Heart left ventricle (tissue), 16 donors: ENCODE measurements at regions of chr9 and their contacts with region 1.

Region 1: DNA sequence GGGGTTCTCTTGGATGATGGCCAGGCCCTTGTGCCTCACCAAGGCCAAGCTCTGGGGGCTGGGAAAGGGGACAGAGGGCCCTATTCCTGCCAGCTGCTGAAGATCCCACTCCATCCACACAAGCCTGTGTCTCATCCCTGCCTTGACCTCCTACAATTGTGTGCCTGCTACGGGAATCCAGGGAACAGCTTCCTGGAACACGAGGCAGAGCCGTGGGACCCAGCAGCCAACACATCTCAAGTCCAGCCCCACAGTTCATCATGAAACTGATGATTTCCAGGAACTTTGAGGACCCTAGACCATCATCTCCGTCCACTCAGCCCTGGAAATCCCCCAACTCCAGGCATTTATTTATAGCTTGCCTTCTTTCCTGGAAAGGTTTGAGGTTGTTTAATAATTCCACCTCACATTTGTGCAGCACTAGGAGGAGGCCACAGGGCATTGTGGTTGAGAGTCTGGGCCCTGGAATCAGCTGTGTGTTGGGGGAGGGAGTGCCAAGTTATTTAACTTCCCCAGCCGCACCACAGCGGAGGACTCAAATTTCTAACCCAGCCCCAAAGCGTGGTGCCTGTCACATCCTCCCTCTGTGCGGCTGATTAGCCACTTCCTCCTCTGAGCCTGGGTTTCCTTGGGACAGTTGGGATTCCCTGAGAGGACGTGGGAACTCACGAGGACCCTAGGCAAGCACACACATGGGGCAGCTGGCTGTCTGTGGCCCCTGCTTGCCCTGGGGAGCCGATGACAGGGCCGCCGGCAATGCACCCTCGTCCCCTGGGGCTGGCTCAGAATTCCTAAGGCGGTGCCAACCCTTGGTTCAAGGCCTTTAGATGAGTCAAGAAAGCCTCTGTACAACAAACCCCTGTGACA is 58.2 kb upstream of the GGTA1 start:
- DNase-seq: peak; percentile 75 to 83 (median 79)
- ATAC-seq: peak; percentile 60 to 91 (median 79)
- H3K4me3 ChIP-seq: no peak overlapping the region
- H3K27ac ChIP-seq: peak overlapping the region; percentile 24 to 84 (median 70)
- H3K4me1 ChIP-seq: peaks cover 10 to 40% (median 28%) of the 10 kb centered on the region in 12 donors
- H3K27me3 ChIP-seq: no peaks in the 10 kb centered on the region
- CTCF ChIP-seq: no peak
- POLR2A ChIP-seq: no peak

Region 2: DNA sequence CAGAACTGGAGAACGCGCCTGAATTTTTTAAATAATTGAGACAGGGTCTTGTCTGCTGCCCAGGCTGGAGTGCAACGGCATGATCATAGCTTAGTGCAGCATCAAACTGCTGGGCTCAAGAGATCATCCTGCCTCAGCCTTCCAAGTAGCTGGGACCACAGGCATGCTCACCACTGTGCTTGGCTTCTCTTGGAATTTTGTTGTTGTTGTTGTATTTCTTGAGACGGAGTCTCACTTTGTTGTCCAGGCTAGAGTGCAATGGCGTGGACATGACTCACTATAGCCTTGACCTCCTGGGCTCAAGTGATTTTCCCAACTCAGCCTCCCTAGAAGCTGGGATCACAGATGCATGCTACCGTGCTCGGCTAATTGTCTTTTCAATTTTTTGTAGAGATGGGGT is 35.3 kb after region 1 on chr9:
- intact Hi-C with region 1: loop called in 5 of 10 experiments (anchors 5 kb)
- DNase-seq: no peak
- ATAC-seq: no peak
- H3K4me3 ChIP-seq: no peak overlapping the region
- H3K27ac ChIP-seq: no peak overlapping the region
- H3K4me1 ChIP-seq: peaks cover 0 to 18% (median 2%) of the 10 kb centered on the region in 12 donors
- H3K27me3 ChIP-seq: peaks cover 0 to 6% (median 0%) of the 10 kb centered on the region in 9 donors
- CTCF ChIP-seq: no peak
- POLR2A ChIP-seq: no peak

Region 3: GRCh38 chr9:121598965-121599871 is 41.4 kb after region 1 on chr9:
- intact Hi-C with region 1: loop called in 8 of 10 experiments (anchors 5 kb)
- DNase-seq: peak; percentile 82 to 88 (median 83)
- ATAC-seq: peak; percentile 70 to 88 (median 83)
- H3K4me3 ChIP-seq: peak overlapping the region; percentile 57 to 78 (median 71)
- H3K27ac ChIP-seq: peak overlapping the region; percentile 79 to 98 (median 95)
- H3K4me1 ChIP-seq: peaks cover 4 to 51% (median 37%) of the 10 kb centered on the region in 12 donors
- H3K27me3 ChIP-seq: peaks cover 0 to 29% (median 0%) of the 10 kb centered on the region in 9 donors
- CTCF ChIP-seq: peak in 1 of 12 donors; percentile 13
- POLR2A ChIP-seq: peak; percentile 2 to 68

Region 4: GRCh38 chr9:121609845-121610570 is 52.2 kb after region 1 on chr9:
- intact Hi-C with region 1: loop called in 3 of 10 experiments (anchors 2 to 5 kb)
- DNase-seq: peak in 4 of 5 donors; percentile 48 to 84 (median 54)
- ATAC-seq: peak; percentile 36 to 66 (median 55)
- H3K4me3 ChIP-seq: no peak overlapping the region
- H3K27ac ChIP-seq: peak overlapping the region; percentile 61 to 93 (median 84)
- H3K4me1 ChIP-seq: peaks cover 27 to 89% (median 75%) of the 10 kb centered on the region in 12 donors
- H3K27me3 ChIP-seq: no peaks in the 10 kb centered on the region
- CTCF ChIP-seq: no peak
- POLR2A ChIP-seq: no peak